Ascending aorta (tissue), 2 donors: ENCODE measurements at regions of chr13 and their contacts with region 1.

Region 1: GRCh38 chr13:112689303-112690165 is at the start of gene ATP11A:
- DNase-seq: peak; percentile 51 to 94
- H3K4me3 ChIP-seq: peak within 1 kb of the TSS; percentile 86 to 89
- H3K27ac ChIP-seq: peak within 1 kb of the TSS; percentile 83 to 93
- H3K4me1 ChIP-seq: peaks cover 0 to 13% of the 10 kb centered on the region in 2 donors
- H3K27me3 ChIP-seq: no peaks in the 10 kb centered on the region
- CTCF ChIP-seq: no peak
- total RNA-seq, gene ATP11A: 50.1 TPM

Region 2: GRCh38 chr13:112545856-112546255 is 143.7 kb before region 1 on chr13:
- intact Hi-C with region 1: no loop called
- DNase-seq: no peak
- H3K4me3 ChIP-seq: no peak overlapping the region
- H3K27ac ChIP-seq: no peak overlapping the region
- H3K4me1 ChIP-seq: no peaks in the 10 kb centered on the region
- H3K27me3 ChIP-seq: no peaks in the 10 kb centered on the region
- CTCF ChIP-seq: no peak

Region 3: GRCh38 chr13:112587212-112587763 is 102.2 kb before region 1 on chr13:
- intact Hi-C with region 1: loop called (anchors 5 kb)
- DNase-seq: peak; percentile 62 to 93
- H3K4me3 ChIP-seq: peak overlapping the region; percentile 82
- H3K27ac ChIP-seq: peak overlapping the region; percentile 89 to 98
- H3K4me1 ChIP-seq: peaks cover 5 to 12% of the 10 kb centered on the region in 2 donors
- H3K27me3 ChIP-seq: no peaks in the 10 kb centered on the region
- CTCF ChIP-seq: peak in 1 of 3 experiments; percentile 22

Region 4: DNA sequence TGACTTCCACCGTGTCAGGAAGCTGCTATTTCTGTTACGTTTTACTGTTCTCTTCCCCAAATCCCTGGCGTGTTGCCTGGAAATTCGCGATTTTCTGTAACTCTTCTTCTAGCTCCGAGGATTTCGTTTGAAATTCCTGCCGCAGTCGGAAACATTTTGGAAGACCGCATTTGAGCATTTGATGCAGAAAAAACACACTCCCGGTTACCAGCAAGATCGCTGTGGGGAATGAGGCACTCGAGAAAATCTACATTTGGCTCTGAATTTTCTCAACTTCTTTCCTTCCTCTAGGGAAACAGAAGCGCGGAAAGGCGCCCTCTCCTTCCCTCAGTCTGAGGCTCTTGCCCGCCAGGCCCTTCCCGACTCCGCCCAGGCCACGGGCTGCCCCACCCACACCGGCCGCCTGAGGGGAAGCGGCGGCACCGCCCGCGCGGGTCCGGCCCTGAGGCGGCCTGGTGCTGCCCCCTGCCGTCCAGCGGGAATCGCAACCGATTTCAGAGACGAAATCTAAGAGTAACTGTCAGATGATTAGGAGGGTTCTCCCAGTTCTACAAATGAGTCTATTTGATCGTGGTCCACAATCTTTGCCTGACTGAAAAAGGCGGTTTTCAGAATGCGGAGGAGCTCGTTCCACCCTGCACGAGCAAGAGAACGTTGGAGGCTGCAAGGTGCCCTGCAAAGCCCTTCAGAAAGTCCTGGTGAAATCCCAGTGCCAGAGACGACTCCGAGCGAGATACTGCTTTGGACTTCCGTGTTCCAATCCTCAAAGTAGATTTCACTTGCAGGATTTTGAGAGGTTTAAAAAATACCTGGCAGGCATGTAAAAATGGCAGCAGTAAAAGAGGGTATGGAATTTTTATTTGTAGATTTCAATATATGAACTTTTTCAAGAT is 83.2 kb before region 1 on chr13:
- intact Hi-C with region 1: no loop called
- DNase-seq: peak; percentile 72 to 95
- H3K4me3 ChIP-seq: peak overlapping the region; percentile 49 to 72
- H3K27ac ChIP-seq: peak overlapping the region; percentile 35 to 76
- H3K4me1 ChIP-seq: peaks cover 0 to 3% of the 10 kb centered on the region in 2 donors
- H3K27me3 ChIP-seq: no peaks in the 10 kb centered on the region
- CTCF ChIP-seq: peak; percentile 94 to 96 (median 95)

Region 5: DNA sequence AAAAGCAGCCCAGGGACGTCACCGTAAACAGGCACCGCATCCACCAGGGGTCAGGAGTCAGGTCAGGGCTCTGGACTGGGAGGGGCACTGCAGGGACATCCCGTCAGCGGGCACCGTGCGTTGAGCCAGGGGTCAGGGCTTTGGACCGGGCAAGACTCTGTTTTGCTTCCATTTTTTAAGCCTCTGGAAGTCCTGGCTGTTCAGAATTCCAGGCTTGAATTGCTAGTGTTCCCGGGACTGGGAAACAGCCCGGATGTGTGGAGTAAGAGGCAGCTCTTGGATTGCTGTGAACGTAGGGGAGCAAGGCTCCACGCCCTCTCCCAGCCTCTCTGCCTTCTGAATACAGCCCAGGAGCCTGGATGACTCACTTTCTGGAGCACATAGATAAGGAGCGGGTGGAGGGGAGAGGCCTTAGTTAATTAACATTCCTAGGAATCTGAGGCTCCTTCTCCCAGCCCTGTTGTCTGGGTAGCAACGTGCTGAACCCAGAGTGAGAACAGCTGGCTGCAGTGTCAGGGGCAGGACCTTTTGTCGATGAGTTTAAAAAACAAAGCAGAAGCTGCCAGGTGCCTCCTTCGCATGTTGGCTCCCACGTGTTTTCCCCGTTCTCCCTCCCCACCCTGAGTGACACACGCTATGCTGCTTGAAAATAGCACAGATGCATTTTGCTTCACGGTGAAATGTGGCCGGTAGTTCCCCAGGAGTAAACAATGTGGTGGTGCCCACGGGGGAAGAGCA is 22.2 kb after region 1 on chr13:
- intact Hi-C with region 1: loop called (anchors 1 kb)
- DNase-seq: peak; percentile 67 to 92
- H3K4me3 ChIP-seq: peak overlapping the region in 1 of 2 donors; percentile 49
- H3K27ac ChIP-seq: peak overlapping the region; percentile 79 to 85
- H3K4me1 ChIP-seq: peaks cover 2 to 7% of the 10 kb centered on the region in 2 donors
- H3K27me3 ChIP-seq: no peaks in the 10 kb centered on the region
- CTCF ChIP-seq: peak in 1 of 3 experiments; percentile 16

Region 6: GRCh38 chr13:112722433-112723250 is 33.1 kb after region 1 on chr13:
- intact Hi-C with region 1: loop called (anchors 2 kb)
- DNase-seq: no peak
- H3K4me3 ChIP-seq: no peak overlapping the region
- H3K27ac ChIP-seq: peak overlapping the region; percentile 75 to 79
- H3K4me1 ChIP-seq: peaks cover 0 to 9% of the 10 kb centered on the region in 2 donors
- H3K27me3 ChIP-seq: no peaks in the 10 kb centered on the region
- CTCF ChIP-seq: no peak